Mammary epithelial cell (primary cell): ENCODE measurements at regions of chr6 and their contacts with region 1.

Region 1: DNA sequence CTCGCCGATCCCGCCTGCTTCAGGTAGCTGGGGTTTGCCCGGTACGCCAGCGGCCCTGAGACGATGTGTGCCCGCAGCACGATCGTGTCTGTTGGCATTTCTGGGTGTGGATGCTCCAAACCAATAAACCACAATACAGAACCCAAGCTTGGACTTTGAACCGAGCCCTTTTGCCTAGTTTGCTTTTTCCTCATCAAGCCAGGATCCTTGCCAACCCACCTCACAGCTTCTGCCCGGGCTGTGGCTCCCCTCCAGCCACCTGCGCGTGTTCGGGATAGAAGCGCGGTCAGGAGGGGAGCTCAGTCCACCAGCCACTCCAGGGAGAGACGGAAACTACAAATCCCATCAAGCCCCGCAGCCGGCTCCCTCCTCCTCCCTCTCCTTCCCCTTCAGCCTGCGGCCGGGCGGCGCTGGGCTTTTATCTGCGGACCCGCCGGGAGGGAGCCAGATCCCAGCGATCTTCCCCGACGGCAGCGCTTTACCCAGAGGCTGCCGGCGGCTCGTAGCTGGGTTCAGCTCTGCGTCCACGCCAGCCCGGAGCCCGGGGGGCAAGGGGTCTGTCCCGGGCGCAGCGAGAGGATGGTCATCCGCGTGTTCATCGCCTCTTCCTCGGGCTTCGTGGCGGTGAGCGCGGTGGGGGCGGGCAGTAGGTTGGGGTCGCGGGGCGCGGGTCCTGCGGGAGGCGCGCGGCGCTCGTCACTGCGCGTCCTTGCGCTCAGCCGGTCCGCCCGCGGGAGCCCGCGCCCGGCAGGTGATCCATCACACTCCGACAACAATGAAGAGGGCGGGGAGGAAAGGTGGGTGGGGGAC is at the start of gene SH3BGRL2:
- DNase-seq: peak; percentile 63
- H3K4me3 ChIP-seq: peak within 1 kb of the TSS; percentile 40 to 77 (median 63)
- H3K27ac ChIP-seq: no peak within 1 kb of the TSS
- H3K4me1 ChIP-seq: peaks cover 17% of the 10 kb centered on the region
- H3K27me3 ChIP-seq: no peaks in the 10 kb centered on the region
- CTCF ChIP-seq: no peak
- total RNA-seq, gene SH3BGRL2: 6.6 to 16.3 TPM

Region 2: DNA sequence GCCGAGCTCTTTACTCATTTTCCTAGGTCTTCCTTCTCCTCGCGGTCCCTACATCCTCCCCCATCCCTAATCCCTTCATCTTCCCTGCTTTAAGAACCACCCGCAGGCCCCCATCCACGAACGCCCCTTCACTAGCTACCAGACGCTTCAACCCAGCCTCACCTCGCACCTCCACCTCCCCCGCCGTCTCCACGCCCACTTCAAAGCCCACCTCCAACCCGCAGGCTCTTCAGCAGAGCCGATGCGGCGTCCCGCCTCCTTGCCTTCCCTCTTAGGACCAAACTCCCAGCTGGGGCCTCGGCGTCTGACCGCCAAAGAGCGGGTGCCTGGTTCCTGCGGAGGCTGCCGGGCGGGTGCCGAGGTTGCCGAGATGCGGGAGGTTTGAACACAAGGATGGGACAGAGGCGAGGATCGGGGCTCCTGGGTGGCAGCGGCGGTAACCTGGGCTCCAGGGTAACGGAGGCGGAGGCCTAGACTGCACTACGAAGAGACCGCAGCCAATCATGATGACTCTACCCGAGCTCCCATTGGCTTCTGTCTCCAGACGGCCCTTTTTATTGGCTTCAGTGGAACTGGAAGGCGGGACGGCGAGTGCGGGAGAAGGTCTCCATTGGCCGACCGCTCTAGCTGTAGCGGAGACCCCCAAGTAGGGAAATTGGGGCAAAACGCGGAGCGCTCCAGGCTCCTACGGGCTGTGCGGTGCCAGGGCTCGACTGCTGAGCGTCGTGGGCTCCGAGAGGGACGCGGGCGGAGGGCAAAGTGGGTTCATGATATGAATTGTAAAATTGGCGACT is 93.9 kb before region 1 on chr6 and contains the start of gene LCA5:
- CTCF ChIA-PET with region 1: no interaction called
- dilution Hi-C with region 1: no loop called
- in situ Hi-C with region 1: no loop called
- intact Hi-C with region 1: loop called (anchors 2 kb)
- DNase-seq: peak; percentile 98
- H3K4me3 ChIP-seq: peak within 1 kb of the TSS; percentile 95 to 98 (median 97)
- H3K27ac ChIP-seq: peak within 1 kb of the TSS; percentile 99
- H3K4me1 ChIP-seq: no peaks in the 10 kb centered on the region
- H3K27me3 ChIP-seq: no peaks in the 10 kb centered on the region
- CTCF ChIP-seq: no peak
- total RNA-seq, gene LCA5: 4.8 to 20.0 TPM

Region 3: DNA sequence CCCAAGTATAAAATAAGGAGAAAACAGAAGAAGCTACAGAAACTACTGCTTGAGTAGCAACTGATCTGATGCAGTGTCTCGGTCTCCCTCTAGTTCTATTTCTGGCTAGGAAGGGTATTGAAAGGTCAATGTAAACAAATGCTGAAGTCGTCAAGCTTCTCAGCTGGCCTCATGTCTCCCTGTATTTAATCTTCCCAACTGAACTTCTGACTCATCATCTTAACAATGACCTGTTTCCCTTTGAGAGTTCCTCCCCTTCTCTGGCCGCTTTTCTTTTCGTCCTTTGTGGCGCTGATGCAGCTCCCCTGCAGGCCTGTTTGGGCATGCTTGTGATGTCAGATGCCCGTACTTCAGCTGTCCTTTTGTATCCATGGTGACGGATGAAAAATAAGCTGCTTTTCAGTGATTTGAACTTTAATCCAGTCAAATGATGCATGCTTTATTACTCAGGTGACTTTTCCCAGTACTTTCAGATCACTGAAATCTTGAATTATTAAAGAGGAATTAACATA is 86.1 kb before region 1 on chr6:
- CTCF ChIA-PET with region 1: no interaction called
- dilution Hi-C with region 1: no loop called
- in situ Hi-C with region 1: no loop called
- intact Hi-C with region 1: loop called (anchors 1 kb)
- DNase-seq: peak; percentile 100
- H3K4me3 ChIP-seq: no peak overlapping the region
- H3K27ac ChIP-seq: peak overlapping the region; percentile 100
- H3K4me1 ChIP-seq: peaks cover 16% of the 10 kb centered on the region
- H3K27me3 ChIP-seq: no peaks in the 10 kb centered on the region
- CTCF ChIP-seq: peak in 1 of 2 donors; percentile 42

Region 4: DNA sequence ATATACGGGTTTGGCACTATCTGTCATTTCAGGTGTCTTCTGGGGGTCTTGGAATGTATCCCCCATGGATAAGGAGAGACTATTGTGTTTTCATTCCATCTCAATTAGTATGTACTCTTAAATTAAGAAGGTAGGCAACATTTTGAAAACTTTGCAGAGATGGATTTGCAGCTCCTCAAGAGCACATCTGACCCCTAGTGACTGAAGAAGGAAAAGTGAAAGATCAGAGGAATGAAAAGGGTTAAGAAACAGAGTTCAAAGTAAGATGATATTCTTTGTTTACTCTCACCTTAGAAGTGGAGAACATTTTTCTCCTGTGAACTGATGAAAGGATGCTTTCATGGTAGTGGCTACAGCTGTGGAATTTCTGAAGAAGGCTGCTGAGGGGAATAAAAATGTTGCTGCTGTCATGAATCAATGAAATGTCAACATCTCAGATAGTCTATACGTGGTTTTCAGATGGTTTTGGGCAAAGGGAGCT is 41.6 kb after region 1 on chr6:
- CTCF ChIA-PET with region 1: no interaction called
- dilution Hi-C with region 1: no loop called
- in situ Hi-C with region 1: no loop called
- intact Hi-C with region 1: loop called (anchors 5 kb)
- DNase-seq: peak; percentile 46
- H3K4me3 ChIP-seq: no peak overlapping the region
- H3K27ac ChIP-seq: peak overlapping the region; percentile 39
- H3K4me1 ChIP-seq: peaks cover 10% of the 10 kb centered on the region
- H3K27me3 ChIP-seq: no peaks in the 10 kb centered on the region
- CTCF ChIP-seq: peak; percentile 50 to 72

Region 5: GRCh38 chr6:79913369-79913768 is 282.3 kb after region 1 on chr6:
- CTCF ChIA-PET with region 1: no interaction called
- dilution Hi-C with region 1: no loop called
- in situ Hi-C with region 1: no loop called
- intact Hi-C with region 1: no loop called
- DNase-seq: no peak
- H3K4me3 ChIP-seq: no peak overlapping the region
- H3K27ac ChIP-seq: no peak overlapping the region
- H3K4me1 ChIP-seq: peaks cover 4% of the 10 kb centered on the region
- H3K27me3 ChIP-seq: no peaks in the 10 kb centered on the region
- CTCF ChIP-seq: no peak